Activated naive CD4-positive, alpha-beta T cell treated with anti-CD3 and anti-CD28 coated beads, Interleukin-2, amount 10 ng/mL, durations not matched to agents 7 days and 5 days (primary cell): ENCODE measurements at regions of chr22 and their contacts with region 1.

Region 1: GRCh38 chr22:22802339-22802970 is 85.2 kb upstream of the IGLL5 start:
- DNase-seq: peak; percentile 67
- H3K4me3 Mint-ChIP-seq: no peak overlapping the region
- H3K27ac Mint-ChIP-seq: no peak overlapping the region
- H3K4me1 Mint-ChIP-seq: no peaks in the 10 kb centered on the region
- H3K27me3 Mint-ChIP-seq: peaks cover 63% of the 10 kb centered on the region

Region 2: DNA sequence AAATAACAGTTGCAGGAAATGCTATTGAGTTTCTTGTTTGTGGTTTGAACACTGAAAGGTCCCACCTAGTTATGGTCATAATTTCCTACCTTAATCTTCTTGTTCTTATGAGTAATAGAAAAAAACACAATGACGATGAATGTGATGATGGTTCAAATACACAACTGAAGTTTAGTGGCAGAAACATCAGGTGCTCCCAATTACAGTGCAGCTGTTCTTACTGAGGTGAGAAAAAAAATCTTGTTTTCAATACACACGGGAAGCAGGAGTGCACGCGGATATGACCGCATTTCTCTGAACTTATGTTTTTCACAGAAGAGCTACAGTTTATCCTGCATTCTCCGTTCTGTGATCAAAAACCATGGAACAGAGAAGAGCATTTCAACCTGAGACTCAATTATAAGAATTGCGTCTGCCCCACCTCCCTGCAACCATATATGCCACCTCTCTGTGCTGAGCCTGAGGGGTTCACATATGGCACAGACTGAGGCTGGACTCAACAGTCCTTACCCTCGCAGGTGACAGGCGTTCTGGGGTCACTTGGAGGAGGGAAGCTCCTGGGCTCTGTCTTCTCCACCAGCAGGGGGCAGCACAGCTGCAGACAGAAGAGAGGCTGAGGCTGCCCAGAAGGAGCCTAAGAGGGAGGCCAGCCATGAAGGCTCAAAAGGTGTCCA is 14.5 kb before region 1 on chr22:
- CTCF ChIA-PET with region 1: interaction called, 21 read pairs
- DNase-seq: peak; percentile 78
- H3K4me3 Mint-ChIP-seq: no peak overlapping the region
- H3K27ac Mint-ChIP-seq: no peak overlapping the region
- H3K4me1 Mint-ChIP-seq: peaks cover 16% of the 10 kb centered on the region
- H3K27me3 Mint-ChIP-seq: peaks cover 38% of the 10 kb centered on the region

Region 3: GRCh38 chr22:22836635-22837034 is 34.2 kb after region 1 on chr22:
- CTCF ChIA-PET with region 1: no interaction called
- DNase-seq: no peak
- H3K4me3 Mint-ChIP-seq: no peak overlapping the region
- H3K27ac Mint-ChIP-seq: no peak overlapping the region
- H3K4me1 Mint-ChIP-seq: peaks cover 20% of the 10 kb centered on the region
- H3K27me3 Mint-ChIP-seq: peaks cover 41% of the 10 kb centered on the region

Region 4: DNA sequence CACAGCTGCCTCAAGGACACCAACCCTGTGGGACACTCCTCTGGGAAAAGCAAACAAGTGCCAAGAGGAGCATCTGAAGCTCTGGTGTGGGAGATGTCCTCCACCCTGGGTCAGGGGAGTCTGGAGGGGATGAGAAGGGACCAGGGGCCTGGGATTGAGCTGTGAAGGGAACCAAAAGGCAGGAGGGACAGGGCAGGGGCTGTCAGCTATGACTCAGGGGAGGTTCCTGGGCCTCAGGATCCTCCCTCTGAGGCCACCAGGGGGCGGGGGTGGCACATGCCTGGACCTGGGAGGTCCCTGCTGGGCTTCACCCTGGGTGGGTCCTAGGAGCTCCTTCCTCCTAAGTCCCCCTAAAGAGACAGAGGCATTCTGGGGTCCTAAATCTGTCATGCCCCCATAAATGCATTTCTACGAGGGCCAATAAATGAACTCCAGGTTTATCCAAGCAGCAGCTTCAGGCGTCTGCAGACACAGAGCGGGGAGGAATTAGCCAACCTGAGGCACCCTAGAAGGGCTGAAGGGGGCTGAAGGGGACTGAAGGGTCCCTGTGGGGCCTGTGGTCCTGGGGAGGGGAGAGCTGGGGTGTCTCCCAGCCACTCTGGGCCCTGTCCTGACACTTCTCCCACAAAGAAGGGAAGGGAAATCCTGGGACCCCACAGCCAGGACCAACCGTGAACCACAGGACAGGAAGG is 53.3 kb after region 1 on chr22:
- CTCF ChIA-PET with region 1: interaction called, 151 read pairs
- DNase-seq: peak; percentile 64
- H3K4me3 Mint-ChIP-seq: no peak overlapping the region
- H3K27ac Mint-ChIP-seq: no peak overlapping the region
- H3K4me1 Mint-ChIP-seq: no peaks in the 10 kb centered on the region
- H3K27me3 Mint-ChIP-seq: peaks cover 79% of the 10 kb centered on the region

Region 5: DNA sequence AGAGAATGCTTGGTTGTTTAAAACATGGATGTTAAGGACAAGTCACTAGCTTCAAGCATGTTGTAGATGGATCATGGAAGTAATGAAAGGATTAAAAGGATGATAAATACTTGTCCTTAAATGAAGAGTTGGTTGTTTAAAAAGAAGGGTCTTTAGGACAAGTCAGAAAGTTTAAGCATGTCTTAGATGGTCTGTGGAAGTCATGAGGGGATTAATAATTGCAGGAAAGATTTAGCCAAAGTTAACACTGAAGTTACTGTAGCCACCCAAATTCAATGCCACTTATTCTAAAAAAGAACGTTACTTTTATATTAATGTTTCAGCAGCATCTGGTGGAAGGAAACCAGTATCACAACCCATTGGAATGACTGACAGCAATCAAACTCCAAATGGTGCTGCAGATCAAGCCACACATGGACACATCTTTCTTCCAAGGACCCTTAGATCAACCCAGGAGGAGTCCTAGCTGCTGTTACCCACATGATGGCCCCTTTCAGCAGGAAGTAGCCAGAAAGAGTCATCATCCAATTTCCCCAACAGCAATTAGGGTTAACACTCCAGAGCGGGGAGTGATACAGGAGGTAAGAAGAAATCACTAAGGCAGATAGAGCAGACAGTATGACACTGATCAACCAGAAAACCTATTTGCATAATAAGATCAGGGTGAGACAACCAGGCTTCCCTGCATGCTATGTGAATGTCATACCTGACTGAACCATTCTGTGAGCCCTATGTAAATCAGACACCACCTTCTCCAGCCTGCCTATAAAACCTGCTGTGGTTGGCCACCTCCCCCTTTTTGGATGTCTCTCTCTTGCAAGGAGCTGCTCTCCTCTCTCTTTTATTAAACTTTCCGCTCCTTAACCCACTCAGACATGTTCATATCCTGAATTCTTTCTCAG is 179.5 kb after region 1 on chr22:
- CTCF ChIA-PET with region 1: no interaction called
- DNase-seq: no peak
- H3K4me3 Mint-ChIP-seq: no peak overlapping the region
- H3K27ac Mint-ChIP-seq: no peak overlapping the region
- H3K4me1 Mint-ChIP-seq: no peaks in the 10 kb centered on the region
- H3K27me3 Mint-ChIP-seq: peaks cover 7% of the 10 kb centered on the region